ENCODE measurements at regions of chr1 and their contacts with region 1.

Region 1: DNA sequence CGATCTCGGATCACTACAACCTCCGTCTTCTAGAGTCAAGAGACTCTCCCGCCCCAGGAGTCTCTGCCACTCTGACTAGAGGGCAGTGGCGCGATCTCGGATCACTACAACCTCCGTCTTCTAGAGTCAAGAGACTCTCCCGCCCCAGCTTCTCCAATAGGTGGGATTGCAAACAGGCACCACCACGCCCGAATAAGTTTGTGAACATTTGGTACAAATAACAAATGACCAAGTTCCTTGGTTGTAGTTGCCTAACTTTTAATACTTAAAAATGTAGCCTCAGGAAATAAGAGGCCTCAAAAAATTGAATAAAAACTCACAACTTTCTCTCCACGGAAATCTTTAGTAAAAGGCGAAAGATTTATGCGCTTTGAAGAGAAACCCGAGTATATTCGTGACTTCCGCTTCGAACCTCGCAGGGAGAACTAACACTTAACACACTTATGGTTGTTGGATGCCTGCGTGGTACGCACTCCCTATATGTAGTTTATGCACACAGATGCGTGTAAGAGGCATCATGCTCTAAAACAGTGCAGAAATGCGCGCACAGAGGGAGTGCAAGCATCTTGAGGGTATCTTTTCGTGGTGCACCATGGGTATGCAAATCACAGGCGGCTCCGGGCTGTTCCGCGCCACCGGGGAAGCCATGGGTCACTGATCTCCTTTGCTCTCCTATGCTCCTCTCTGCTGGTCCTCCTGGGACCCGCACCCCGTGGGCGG is 11.4 kb downstream of the BTBD19 start:
- DNase-seq: peak; percentile 65 to 89 (median 85)
- H3K4me3 ChIP-seq: peak overlapping the region; percentile 72
- H3K4me3 Mint-ChIP-seq: peak overlapping the region; percentile 91 to 98 (median 95)
- H3K27ac ChIP-seq: peak overlapping the region; percentile 99
- H3K27ac Mint-ChIP-seq: peak overlapping the region; percentile 100
- H3K4me1 ChIP-seq: peaks cover 14% of the 10 kb centered on the region
- H3K4me1 Mint-ChIP-seq: peaks cover 32 to 44% (median 40%) of the 10 kb centered on the region in 3 donors
- H3K27me3 ChIP-seq: no peaks in the 10 kb centered on the region
- H3K27me3 Mint-ChIP-seq: no peaks in the 10 kb centered on the region

Region 2: DNA sequence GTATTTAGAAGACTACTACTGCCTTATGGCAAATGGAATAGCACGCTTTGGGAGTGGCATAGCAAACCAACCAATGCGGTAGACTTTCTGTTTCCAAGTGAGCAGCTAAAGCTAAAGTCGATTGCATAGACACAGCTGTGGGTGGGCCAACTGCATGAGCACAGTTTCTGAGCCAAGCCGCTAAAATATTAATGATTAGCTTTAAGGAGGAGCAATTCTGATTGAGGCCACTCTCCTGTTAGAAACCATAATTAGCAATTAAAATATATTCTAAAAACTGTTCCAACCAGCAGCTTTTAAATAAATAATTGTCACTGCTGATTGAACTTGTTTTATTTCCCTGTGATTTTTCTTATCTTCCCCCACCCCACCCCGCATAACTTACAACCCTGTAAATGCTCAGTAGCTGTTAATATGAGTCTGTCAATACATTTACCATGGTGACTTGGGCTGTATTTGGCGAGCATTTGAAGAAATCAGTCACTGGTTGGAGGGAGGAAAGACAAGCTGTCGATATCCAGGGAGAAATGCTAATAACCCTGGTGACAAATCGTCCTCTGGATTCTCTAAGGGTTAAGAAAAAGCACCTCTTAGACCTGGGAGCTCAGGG is 382.6 kb before region 1 on chr1:
- CTCF ChIA-PET with region 1: no interaction called
- POLR2A ChIA-PET with region 1: no interaction called
- DNase-seq: no peak
- H3K4me3 ChIP-seq: no peak overlapping the region
- H3K4me3 Mint-ChIP-seq: no peak overlapping the region
- H3K27ac ChIP-seq: no peak overlapping the region
- H3K27ac Mint-ChIP-seq: no peak overlapping the region
- H3K4me1 ChIP-seq: no peaks in the 10 kb centered on the region
- H3K4me1 Mint-ChIP-seq: no peaks in the 10 kb centered on the region
- H3K27me3 ChIP-seq: no peaks in the 10 kb centered on the region
- H3K27me3 Mint-ChIP-seq: peaks cover 11 to 17% of the 10 kb centered on the region in 2 donors

Region 3: DNA sequence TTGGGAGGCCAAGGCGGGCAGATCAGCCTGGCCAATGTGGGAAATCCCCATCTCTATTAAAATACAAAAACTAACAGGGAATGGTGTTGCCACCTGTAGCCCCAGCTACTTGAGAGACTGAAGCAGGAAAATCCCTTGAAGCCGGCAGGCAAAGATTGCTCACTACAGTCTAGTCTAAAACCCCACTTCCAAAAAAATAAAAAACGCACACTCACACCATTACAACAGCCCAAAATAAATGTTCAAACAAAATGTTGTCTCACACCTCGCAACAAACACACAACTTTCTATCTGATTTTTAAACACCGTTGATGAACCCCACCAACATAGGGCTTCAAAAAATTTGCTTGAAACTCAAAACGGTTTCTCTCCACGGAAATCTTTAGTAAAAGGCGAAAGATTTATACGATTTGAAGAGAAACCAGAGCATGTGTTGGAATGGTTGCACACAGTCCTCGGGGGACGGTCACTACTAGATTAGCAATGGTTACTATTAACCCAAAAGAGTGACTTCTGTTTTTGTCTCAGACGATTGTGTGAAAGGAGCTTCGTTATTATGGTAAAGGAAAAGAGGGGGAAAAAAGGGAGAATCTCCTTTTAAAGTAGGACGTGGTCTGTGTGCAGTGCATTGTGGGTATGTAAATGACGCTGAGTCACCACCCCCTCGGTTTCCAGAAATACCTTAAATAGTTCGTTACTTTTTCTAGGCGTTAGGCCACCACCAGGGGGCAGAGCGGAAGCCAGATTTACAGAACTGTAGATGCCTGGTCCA is 88.8 kb before region 1 on chr1 and contains the start of gene RNU5D-1:
- CTCF ChIA-PET with region 1: interaction called, 28 read pairs
- POLR2A ChIA-PET with region 1: interaction called, 7 read pairs
- DNase-seq: peak; percentile 88 to 94 (median 90)
- H3K4me3 ChIP-seq: peak within 1 kb of the TSS; percentile 37
- H3K4me3 Mint-ChIP-seq: peak within 1 kb of the TSS; percentile 63 to 86 (median 78)
- H3K27ac ChIP-seq: peak within 1 kb of the TSS; percentile 97
- H3K27ac Mint-ChIP-seq: peak within 1 kb of the TSS; percentile 96 to 100 (median 100)
- H3K4me1 ChIP-seq: peaks cover 14% of the 10 kb centered on the region
- H3K4me1 Mint-ChIP-seq: peaks cover 19 to 36% (median 28%) of the 10 kb centered on the region in 3 donors
- H3K27me3 ChIP-seq: no peaks in the 10 kb centered on the region
- H3K27me3 Mint-ChIP-seq: no peaks in the 10 kb centered on the region
- total RNA-seq, gene RNU5D-1: not detected

Region 4: DNA sequence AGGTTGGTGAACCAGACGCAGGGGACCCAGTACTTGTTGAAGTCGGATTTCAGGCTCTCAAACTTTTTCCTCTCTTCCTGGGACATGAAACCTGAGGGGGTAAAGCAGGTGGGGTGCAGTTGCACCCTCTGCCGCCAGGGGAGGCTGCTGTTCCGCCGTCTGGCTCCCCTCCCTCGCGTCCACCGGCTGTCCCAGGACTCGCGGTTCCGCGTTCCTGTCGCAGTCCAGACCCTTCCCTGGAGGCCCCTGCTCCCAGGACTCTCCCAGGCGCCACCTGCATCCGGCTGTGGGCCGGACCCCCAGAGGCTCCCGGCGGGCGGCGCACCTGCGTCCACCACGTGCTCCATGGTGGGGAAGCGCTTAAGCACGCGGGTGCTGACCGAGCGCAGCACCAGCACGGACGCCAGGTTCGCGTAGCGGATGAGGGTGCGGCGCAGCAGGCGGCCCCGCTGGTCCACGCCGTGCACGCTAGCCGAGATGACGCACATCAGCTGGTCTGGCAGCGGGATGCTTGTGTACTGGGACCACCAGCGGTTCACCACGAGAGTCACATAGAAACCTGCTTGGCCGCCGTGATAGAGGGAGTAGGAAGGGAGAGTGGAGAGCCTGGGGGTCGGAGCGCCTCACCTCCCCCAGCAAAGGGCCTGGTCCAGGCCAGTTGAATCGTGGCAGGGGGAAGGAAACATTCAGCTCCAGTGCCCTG is 33.5 kb before region 1 on chr1:
- CTCF ChIA-PET with region 1: interaction called, 26 read pairs
- POLR2A ChIA-PET with region 1: interaction called, 4 read pairs
- DNase-seq: peak; percentile 71 to 83 (median 77)
- H3K4me3 ChIP-seq: peak overlapping the region; percentile 74
- H3K4me3 Mint-ChIP-seq: peak overlapping the region; percentile 76 to 93 (median 81)
- H3K27ac ChIP-seq: no peak overlapping the region
- H3K27ac Mint-ChIP-seq: peak overlapping the region; percentile 77 to 98 (median 87)
- H3K4me1 ChIP-seq: peaks cover 29% of the 10 kb centered on the region
- H3K4me1 Mint-ChIP-seq: peaks cover 27 to 36% (median 30%) of the 10 kb centered on the region in 3 donors
- H3K27me3 ChIP-seq: no peaks in the 10 kb centered on the region
- H3K27me3 Mint-ChIP-seq: no peaks in the 10 kb centered on the region

Region 5: GRCh38 chr1:44807262-44808062 is 12.3 kb before region 1 on chr1 and contains the start of gene DYNLT4:
- CTCF ChIA-PET with region 1: interaction called, 59 read pairs
- POLR2A ChIA-PET with region 1: interaction called, 120 read pairs
- DNase-seq: peak; percentile 84 to 95 (median 90)
- H3K4me3 ChIP-seq: peak within 1 kb of the TSS; percentile 58
- H3K4me3 Mint-ChIP-seq: peak within 1 kb of the TSS; percentile 67 to 90 (median 84)
- H3K27ac ChIP-seq: peak within 1 kb of the TSS; percentile 96
- H3K27ac Mint-ChIP-seq: peak within 1 kb of the TSS; percentile 97 to 100 (median 100)
- H3K4me1 ChIP-seq: peaks cover 77% of the 10 kb centered on the region
- H3K4me1 Mint-ChIP-seq: peaks cover 65 to 80% (median 71%) of the 10 kb centered on the region in 3 donors
- H3K27me3 ChIP-seq: no peaks in the 10 kb centered on the region
- H3K27me3 Mint-ChIP-seq: peaks cover 0 to 6% of the 10 kb centered on the region in 2 donors
- total RNA-seq, gene DYNLT4: 0.28 to 0.31 TPM

Region 6: GRCh38 chr1:44907893-44908292 is 88.1 kb after region 1 on chr1:
- CTCF ChIA-PET with region 1: no interaction called
- POLR2A ChIA-PET with region 1: no interaction called
- DNase-seq: no peak
- H3K4me3 ChIP-seq: no peak overlapping the region
- H3K4me3 Mint-ChIP-seq: no peak overlapping the region
- H3K27ac ChIP-seq: no peak overlapping the region
- H3K27ac Mint-ChIP-seq: peak overlapping the region in 1 of 8 donors; percentile 57
- H3K4me1 ChIP-seq: no peaks in the 10 kb centered on the region
- H3K4me1 Mint-ChIP-seq: no peaks in the 10 kb centered on the region
- H3K27me3 ChIP-seq: no peaks in the 10 kb centered on the region
- H3K27me3 Mint-ChIP-seq: no peaks in the 10 kb centered on the region